ENCODE measurements at regions of chr11 and their contacts with region 1.

Region 1: DNA sequence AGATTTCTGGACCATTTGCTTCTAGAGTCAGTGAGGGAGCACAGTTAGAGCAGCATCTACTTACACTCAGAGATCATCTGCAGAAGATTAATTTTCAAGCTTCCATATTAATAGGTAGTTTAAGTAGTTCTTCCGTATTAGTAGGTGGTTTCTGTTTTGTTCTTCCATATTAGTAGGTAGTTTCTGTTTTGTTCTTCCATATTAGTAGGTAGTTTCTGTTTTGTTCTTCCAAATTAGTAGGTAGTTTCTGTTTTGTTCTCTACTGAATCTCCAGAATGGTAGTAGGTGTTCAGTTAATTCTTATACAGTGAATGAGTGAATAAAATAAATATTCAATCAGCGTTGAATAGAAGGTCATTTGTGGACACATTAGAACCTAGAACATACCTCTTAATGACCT is 175.7 kb downstream of the TMEM135 start:
- DNase-seq: no peak
- ATAC-seq: peak; percentile 69
- H3K4me3 Mint-ChIP-seq: no peak overlapping the region
- H3K27ac Mint-ChIP-seq: no peak overlapping the region
- H3K4me1 Mint-ChIP-seq: peaks cover 15% of the 10 kb centered on the region
- H3K27me3 Mint-ChIP-seq: no peaks in the 10 kb centered on the region

Region 2: GRCh38 chr11:87198266-87198881 is 15.1 kb before region 1 on chr11:
- CTCF ChIA-PET with region 1: no interaction called
- POLR2A ChIA-PET with region 1: no interaction called
- intact Hi-C with region 1: no loop called
- DNase-seq: no peak
- ATAC-seq: no peak
- H3K4me3 Mint-ChIP-seq: no peak overlapping the region
- H3K27ac Mint-ChIP-seq: no peak overlapping the region
- H3K4me1 Mint-ChIP-seq: no peaks in the 10 kb centered on the region
- H3K27me3 Mint-ChIP-seq: no peaks in the 10 kb centered on the region

Region 3: DNA sequence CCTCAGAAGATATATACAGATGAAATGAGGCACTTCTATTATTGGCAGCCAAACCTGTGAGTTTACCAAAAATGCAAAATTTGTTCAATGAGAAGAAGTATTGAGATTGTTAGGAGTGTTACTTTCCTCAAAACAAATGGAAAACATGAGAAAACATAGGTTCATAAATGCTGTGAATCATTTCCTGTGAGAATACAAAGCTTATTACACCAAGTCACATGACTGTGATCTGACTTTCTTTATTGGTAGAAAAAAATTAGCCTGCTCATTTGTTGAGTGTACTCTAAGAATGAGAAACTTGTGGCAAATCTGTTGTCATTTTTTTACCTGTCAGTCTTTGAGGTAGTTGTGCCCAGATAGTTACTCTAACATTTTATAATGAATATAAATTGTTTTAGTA is 39.4 kb after region 1 on chr11:
- CTCF ChIA-PET with region 1: no interaction called
- POLR2A ChIA-PET with region 1: no interaction called
- intact Hi-C with region 1: loop called in 1 of 2 experiments (anchors 1 kb)
- DNase-seq: no peak
- ATAC-seq: peak; percentile 95
- H3K4me3 Mint-ChIP-seq: no peak overlapping the region
- H3K27ac Mint-ChIP-seq: peak overlapping the region; percentile 4
- H3K4me1 Mint-ChIP-seq: peaks cover 20% of the 10 kb centered on the region
- H3K27me3 Mint-ChIP-seq: peaks cover 2% of the 10 kb centered on the region